ENCODE measurements at regions of chr12 and their contacts with region 1.

Region 1: DNA sequence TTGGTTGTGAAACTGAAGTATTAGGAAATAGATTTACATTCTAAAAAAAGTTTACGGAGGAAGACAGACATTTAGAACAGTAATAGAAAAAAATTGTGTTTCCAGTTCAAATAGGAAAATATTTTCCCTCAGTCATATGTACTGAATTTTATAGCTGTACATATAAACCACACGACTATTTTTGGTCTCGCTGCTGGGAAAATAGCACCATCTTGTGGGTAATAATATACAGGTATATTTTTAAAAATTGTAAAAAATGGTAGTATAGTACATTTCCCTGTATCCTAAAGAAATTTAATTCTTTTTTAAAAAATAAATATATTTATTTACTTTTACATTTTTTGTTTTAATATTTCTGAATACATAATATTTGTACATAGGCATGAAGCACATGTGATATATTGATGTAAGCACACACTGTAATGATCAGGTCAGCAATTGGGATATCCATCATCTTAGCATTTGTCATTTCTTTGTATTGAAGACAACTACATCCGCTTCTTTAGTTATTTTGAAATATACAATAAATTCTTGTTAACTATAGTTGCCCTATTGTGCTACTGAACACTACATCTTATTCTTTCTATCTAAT is 168.6 kb downstream of the ALX1 start:
- DNase-seq: no peak
- ATAC-seq: no peak
- H3K4me3 ChIP-seq: no peak overlapping the region
- H3K4me3 Mint-ChIP-seq: no peak overlapping the region
- H3K27ac ChIP-seq: no peak overlapping the region
- H3K27ac Mint-ChIP-seq: no peak overlapping the region
- H3K4me1 ChIP-seq: no peaks in the 10 kb centered on the region
- H3K4me1 Mint-ChIP-seq: no peaks in the 10 kb centered on the region
- H3K27me3 ChIP-seq: no peaks in the 10 kb centered on the region
- H3K27me3 Mint-ChIP-seq: no peaks in the 10 kb centered on the region

Region 2: DNA sequence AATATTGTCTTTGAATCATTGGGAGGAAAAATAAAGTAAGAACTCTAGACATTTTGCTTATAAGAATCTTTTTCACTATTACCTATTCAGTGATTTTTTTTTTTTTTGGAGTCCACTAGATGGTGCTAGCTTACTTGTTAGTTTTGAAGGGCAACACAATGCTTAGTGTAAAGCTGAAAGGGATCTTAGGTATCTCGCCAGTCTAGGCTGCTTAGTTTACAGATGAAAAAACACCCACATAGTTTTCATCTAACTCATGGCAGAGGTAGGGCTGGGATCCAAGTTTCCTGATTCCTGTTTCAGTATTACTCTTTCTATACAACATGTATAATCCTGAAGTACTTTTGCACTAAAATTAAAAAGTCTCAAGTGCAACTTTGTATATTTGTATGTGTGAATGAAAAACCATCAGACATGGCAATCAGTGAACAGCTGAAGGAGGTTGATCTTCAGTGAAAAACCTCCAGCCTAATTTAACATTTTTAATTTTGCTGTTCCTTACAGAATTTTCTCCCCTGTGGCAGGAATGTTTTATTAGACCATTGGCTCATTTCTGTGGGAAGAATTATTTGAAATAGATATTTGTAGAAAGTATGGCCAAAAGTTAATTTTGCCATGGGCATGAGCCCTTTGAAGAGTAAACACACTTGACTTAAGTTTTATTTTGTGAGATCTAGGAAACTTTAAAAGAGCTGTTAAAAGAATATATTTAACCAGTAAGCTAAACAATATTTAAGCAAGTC is 371.8 kb before region 1 on chr12:
- CTCF ChIA-PET with region 1: no interaction called
- POLR2A ChIA-PET with region 1: no interaction called
- intact Hi-C with region 1: loop called in 1 of 2 experiments (anchors 2 kb)
- DNase-seq: no peak
- ATAC-seq: no peak
- H3K4me3 ChIP-seq: no peak overlapping the region
- H3K4me3 Mint-ChIP-seq: no peak overlapping the region
- H3K27ac ChIP-seq: no peak overlapping the region
- H3K27ac Mint-ChIP-seq: no peak overlapping the region
- H3K4me1 ChIP-seq: no peaks in the 10 kb centered on the region
- H3K4me1 Mint-ChIP-seq: no peaks in the 10 kb centered on the region
- H3K27me3 ChIP-seq: no peaks in the 10 kb centered on the region
- H3K27me3 Mint-ChIP-seq: no peaks in the 10 kb centered on the region

Measured in naive thymus-derived CD4-positive, alpha-beta T cell (primary cell).